Activated naive CD4-positive, alpha-beta T cell treated with anti-CD3 and anti-CD28 coated beads for 36 hours (primary cell): ENCODE measurements at regions of chr4 and their contacts with region 1.

Region 1: DNA sequence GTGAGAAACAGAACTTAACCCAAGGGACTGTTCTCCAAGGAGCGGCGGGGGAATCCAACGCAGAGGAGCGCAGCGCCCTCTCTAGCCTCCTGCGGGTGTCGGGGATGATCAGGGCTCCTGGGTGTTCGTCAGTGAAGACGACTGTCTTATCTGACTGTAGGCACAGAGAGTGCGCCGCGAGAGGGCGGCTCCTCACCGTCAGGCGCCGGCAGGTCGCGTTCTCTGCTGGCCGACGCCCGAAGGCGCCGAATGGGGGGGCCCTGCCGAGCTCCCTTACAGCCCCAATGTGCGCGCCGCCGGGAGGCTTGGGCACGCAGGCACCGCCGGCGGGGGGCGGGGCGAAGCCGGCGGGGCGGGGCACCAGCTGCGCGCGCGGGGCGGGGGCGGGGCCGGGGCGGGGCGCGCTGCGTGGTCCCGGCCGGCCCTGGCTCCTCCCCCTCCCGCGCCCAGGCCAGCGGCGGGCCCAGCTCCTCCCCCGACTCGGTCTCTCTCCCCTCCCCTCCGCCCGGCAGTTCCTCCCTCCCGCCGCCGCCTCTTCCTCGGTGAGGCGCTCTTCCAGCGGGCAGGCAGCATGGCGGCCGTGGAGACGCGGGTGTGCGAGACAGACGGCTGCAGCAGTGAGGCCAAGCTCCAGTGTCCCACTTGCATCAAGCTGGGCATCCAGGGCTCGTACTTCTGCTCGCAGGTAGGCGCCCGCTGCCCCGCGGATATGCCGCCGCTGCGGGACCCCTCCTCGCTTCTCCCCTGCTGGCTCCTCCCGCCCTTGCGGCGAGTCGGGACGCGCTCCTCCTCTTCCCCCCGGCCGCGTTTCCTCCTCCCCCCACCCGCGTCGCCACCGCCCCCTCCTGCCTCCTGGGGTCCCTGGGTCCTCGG is at the start of gene METAP1:
- DNase-seq: peak; percentile 95
- H3K4me3 Mint-ChIP-seq: peak within 1 kb of the TSS; percentile 84
- H3K27ac Mint-ChIP-seq: peak within 1 kb of the TSS; percentile 92
- H3K4me1 Mint-ChIP-seq: peaks cover 38% of the 10 kb centered on the region
- H3K27me3 Mint-ChIP-seq: no peaks in the 10 kb centered on the region
- total RNA-seq, gene METAP1: 65.6 to 70.1 TPM

Region 2: GRCh38 chr4:98260579-98261290 is 734.7 kb before region 1 on chr4:
- CTCF ChIA-PET with region 1: no interaction called
- intact Hi-C with region 1: loop called (anchors 1 kb)
- DNase-seq: peak; percentile 95
- H3K4me3 Mint-ChIP-seq: peak overlapping the region; percentile 93
- H3K27ac Mint-ChIP-seq: peak overlapping the region; percentile 94
- H3K4me1 Mint-ChIP-seq: peaks cover 43% of the 10 kb centered on the region
- H3K27me3 Mint-ChIP-seq: no peaks in the 10 kb centered on the region

Region 3: GRCh38 chr4:98601708-98602107 is 393.7 kb before region 1 on chr4:
- CTCF ChIA-PET with region 1: no interaction called
- intact Hi-C with region 1: loop called (anchors 1 kb)
- DNase-seq: peak; percentile 63
- H3K4me3 Mint-ChIP-seq: peak overlapping the region; percentile 41
- H3K27ac Mint-ChIP-seq: peak overlapping the region; percentile 84
- H3K4me1 Mint-ChIP-seq: peaks cover 46% of the 10 kb centered on the region
- H3K27me3 Mint-ChIP-seq: no peaks in the 10 kb centered on the region

Region 4: DNA sequence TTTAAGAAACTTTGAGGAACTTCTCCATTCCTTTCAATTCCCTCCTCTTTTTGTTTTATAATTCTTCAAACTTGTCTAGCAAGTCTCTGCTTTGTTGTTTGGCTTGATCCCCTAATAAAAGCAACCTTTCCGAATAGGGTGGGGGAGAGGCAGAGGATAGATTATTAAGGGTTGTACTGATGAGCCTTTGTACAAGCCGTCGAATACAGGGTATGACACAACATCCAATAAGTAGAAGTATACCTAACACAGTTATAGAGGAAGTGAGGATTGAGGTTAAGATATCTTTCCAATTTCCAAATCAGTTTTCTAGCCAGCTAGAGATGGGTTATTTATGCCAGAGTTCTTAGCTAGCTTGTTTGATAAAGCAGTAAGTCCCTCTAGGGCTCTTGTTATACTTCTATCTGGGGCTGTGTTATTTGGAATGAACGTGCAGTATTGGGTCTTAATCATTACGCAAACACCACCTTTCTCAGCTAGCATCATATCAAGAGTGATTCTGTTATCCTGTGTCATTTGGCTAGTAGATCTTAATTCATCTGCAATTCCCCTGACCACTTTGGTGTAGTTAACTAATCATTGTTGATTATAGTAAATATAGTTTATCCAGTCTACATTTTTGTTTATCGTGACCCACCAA is 18.6 kb after region 1 on chr4:
- CTCF ChIA-PET with region 1: interaction called, 3 read pairs
- intact Hi-C with region 1: loop called (anchors 2 kb)
- DNase-seq: no peak
- H3K4me3 Mint-ChIP-seq: no peak overlapping the region
- H3K27ac Mint-ChIP-seq: no peak overlapping the region
- H3K4me1 Mint-ChIP-seq: peaks cover 22% of the 10 kb centered on the region
- H3K27me3 Mint-ChIP-seq: no peaks in the 10 kb centered on the region

Region 5: DNA sequence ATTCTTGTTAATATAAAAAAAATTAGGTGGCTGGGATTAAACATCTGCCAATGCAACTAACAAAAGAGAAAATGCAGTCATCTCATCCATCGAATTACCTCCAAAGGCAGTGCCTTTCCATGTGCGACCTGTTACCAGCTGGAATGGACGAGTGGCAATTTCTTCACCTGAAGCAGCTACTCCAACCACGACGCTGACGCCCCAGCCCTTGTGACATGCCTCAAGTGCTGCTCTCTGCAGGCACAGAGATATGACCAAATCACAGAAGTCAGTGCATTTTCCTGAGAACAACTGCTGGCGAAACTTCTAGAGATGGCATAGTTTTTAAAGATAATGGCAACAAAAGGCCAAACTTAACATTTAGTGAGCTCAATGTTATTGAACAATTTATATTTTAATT is 79.4 kb after region 1 on chr4:
- CTCF ChIA-PET with region 1: interaction called, 10 read pairs
- intact Hi-C with region 1: no loop called
- DNase-seq: no peak
- H3K4me3 Mint-ChIP-seq: no peak overlapping the region
- H3K27ac Mint-ChIP-seq: no peak overlapping the region
- H3K4me1 Mint-ChIP-seq: no peaks in the 10 kb centered on the region
- H3K27me3 Mint-ChIP-seq: no peaks in the 10 kb centered on the region

Region 6: DNA sequence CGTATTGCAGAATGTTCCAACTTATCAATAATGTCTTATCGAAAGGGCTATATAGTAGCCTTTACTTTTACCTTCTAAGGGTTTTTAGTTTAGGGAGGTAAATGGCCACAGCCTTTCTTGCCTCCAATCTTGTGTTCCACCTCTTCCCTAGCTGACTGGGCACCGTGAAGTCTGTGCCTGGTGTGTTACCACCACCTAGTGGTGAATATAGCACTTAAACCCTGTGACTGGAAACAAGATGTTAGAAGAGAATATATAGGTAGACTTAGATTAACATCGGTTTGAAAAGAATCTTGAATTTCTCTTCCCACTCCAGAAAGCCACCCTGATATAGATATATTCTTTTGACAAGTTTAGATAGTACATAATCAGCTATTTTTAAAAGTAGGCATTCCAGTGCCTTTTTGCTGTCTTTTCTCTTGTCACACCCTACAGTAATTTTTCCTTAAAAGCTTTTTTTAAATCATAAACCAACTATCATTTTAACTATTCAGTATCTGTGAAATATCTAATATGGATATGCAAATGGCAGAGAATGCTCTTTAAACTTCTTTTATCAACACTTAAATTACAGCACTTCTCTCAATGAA is 467.6 kb after region 1 on chr4:
- CTCF ChIA-PET with region 1: interaction called, 4 read pairs
- intact Hi-C with region 1: loop called (anchors 1 kb)
- DNase-seq: peak; percentile 70
- H3K4me3 Mint-ChIP-seq: no peak overlapping the region
- H3K27ac Mint-ChIP-seq: no peak overlapping the region
- H3K4me1 Mint-ChIP-seq: no peaks in the 10 kb centered on the region
- H3K27me3 Mint-ChIP-seq: peaks cover 6% of the 10 kb centered on the region

Region 7: DNA sequence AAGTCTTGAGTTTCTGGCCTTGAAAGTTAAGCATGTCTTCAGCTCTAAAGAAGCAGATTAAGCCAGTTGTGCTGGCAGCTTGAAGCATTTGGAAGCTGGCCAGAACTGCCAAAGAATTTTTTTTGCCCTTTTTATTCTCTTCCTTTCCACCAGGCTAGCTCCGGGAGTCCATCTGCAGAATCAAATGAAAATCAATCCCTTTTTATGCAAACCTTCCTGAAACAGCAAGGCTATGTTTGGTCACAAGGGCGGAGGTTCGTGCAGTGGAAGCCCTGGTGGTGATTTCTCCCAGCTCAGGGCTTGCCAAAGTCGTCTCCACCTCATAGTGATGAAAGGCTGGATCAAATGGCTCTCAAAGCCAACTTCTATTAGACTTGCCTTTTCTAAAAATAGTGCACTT is 683.8 kb after region 1 on chr4:
- CTCF ChIA-PET with region 1: no interaction called
- intact Hi-C with region 1: no loop called
- DNase-seq: no peak
- H3K4me3 Mint-ChIP-seq: no peak overlapping the region
- H3K27ac Mint-ChIP-seq: no peak overlapping the region
- H3K4me1 Mint-ChIP-seq: no peaks in the 10 kb centered on the region
- H3K27me3 Mint-ChIP-seq: peaks cover 37% of the 10 kb centered on the region

Region 8: DNA sequence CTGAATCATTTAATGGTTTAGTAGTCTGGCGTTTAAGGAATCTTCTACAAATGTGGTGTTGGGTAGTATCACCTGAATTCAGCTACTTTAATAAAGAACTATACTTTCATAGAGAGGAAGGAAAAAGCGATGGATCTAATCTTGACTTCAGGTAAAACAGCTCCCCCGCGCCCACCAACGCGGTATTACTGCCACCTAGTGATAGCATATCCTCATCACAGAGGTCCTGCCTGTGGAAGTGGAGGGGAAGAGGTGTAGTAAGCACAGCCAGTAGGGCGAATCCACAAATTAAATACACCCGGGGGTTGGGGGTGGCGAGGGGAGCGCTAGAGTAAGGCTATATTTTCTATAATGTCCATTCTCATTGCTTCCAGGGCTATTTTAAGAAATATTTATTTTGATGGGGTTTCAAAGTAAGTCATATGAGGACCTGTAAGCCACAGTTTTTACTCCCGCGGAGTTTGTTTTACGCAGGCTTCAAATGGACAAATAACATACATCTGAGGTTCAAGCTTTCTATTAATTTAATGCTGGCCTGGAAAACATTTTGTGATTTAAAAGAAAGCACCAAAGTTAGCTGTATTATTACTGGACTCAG is 812.9 kb after region 1 on chr4:
- CTCF ChIA-PET with region 1: no interaction called
- intact Hi-C with region 1: loop called (anchors 1 kb)
- DNase-seq: peak; percentile 87
- H3K4me3 Mint-ChIP-seq: no peak overlapping the region
- H3K27ac Mint-ChIP-seq: no peak overlapping the region
- H3K4me1 Mint-ChIP-seq: peaks cover 14% of the 10 kb centered on the region
- H3K27me3 Mint-ChIP-seq: peaks cover 8% of the 10 kb centered on the region